ENCODE measurements at regions of chr11 and their contacts with region 1.

Region 1: DNA sequence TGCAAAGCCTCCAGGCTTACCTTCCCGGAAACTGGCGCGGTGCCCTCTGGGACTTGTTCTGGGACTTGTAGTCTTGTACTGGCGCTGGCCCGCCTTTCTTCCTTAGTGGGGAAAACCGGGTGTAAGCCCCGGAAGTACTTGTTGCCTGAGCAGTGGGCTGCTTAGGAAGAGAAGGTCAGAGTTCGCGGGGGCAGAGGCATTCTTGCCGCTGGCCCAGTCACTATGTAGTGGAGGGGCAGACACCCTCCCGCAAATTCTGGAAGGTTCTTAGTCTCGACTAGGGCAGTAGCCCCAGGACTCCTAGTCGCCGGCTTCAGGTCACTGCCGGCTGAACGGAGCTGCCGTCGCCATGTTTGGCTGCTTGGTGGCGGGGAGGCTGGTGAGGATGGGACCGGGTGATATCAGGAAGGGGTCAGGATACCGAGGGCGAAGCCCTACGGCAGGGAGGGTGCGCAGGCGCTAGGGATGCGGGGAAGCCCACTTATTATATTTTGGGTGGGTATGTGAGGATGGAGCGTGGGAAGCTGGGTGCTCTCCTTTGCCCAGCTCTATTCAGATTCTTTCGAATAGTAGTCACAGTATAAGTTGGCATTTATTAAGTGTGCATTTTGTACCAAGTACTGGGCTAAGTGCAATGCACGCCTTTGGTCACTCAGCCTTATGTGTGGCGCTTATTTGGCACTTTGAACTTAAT is at the start of gene HIKESHI:
- DNase-seq: peak; percentile 100
- H3K4me3 ChIP-seq: peak within 1 kb of the TSS; percentile 70 to 91 (median 79)
- H3K27ac ChIP-seq: peak within 1 kb of the TSS; percentile 84 to 94 (median 89)
- H3K4me1 ChIP-seq: peaks cover 0 to 21% (median 20%) of the 10 kb centered on the region in 4 donors
- H3K27me3 ChIP-seq: no peaks in the 10 kb centered on the region
- CTCF ChIP-seq: no peak
- EP300 ChIP-seq: peak in 1 of 4 donors; percentile 58
- POLR2A ChIP-seq: peak in 1 of 2 donors; percentile 42
- total RNA-seq, gene HIKESHI: 59.8 to 71.3 (median 65.2) TPM

Region 2: GRCh38 chr11:86244522-86245368 is 57.5 kb before region 1 on chr11 and contains the start of gene EED:
- intact Hi-C with region 1: loop called (anchors 2 kb)
- DNase-seq: peak; percentile 97
- H3K4me3 ChIP-seq: peak within 1 kb of the TSS; percentile 68 to 96 (median 75)
- H3K27ac ChIP-seq: peak within 1 kb of the TSS; percentile 95 to 100 (median 98)
- H3K4me1 ChIP-seq: peaks cover 0 to 42% (median 31%) of the 10 kb centered on the region in 4 donors
- H3K27me3 ChIP-seq: no peaks in the 10 kb centered on the region
- CTCF ChIP-seq: no peak
- EP300 ChIP-seq: no peak
- POLR2A ChIP-seq: peak; percentile 29 to 46
- total RNA-seq, gene EED: 18.2 to 28.6 (median 23.5) TPM

Region 3: GRCh38 chr11:86592659-86593451 is 290.6 kb after region 1 on chr11:
- intact Hi-C with region 1: no loop called
- DNase-seq: peak; percentile 87
- H3K4me3 ChIP-seq: no peak overlapping the region
- H3K27ac ChIP-seq: peak overlapping the region; percentile 43 to 67 (median 62)
- H3K4me1 ChIP-seq: peaks cover 0 to 36% (median 33%) of the 10 kb centered on the region in 4 donors
- H3K27me3 ChIP-seq: no peaks in the 10 kb centered on the region
- CTCF ChIP-seq: no peak
- EP300 ChIP-seq: no peak
- POLR2A ChIP-seq: no peak

Measured in sigmoid colon (tissue), 7 donors.